ENCODE measurements at regions of chr2 and their contacts with region 1.

Region 1: GRCh38 chr2:68121873-68122679 is 35.6 kb upstream of the PNO1 start:
- DNase-seq: peak; percentile 96
- H3K4me3 ChIP-seq: no peak overlapping the region
- H3K27ac ChIP-seq: no peak overlapping the region
- H3K4me1 ChIP-seq: peaks cover 4 to 9% (median 8%) of the 10 kb centered on the region in 4 donors
- H3K27me3 ChIP-seq: no peaks in the 10 kb centered on the region
- CTCF ChIP-seq: peak in 2 of 3 experiments; percentile 93
- EP300 ChIP-seq: no peak
- POLR2A ChIP-seq: no peak

Region 2: GRCh38 chr2:68196120-68196716 is 74.1 kb after region 1 on chr2:
- intact Hi-C with region 1: loop called (anchors 10 kb)
- DNase-seq: no peak
- H3K4me3 ChIP-seq: no peak overlapping the region
- H3K27ac ChIP-seq: peak overlapping the region in 1 of 4 donors; percentile 37
- H3K4me1 ChIP-seq: peaks cover 23 to 65% (median 46%) of the 10 kb centered on the region in 4 donors
- H3K27me3 ChIP-seq: no peaks in the 10 kb centered on the region
- CTCF ChIP-seq: peak in 2 of 3 experiments; percentile 73 to 75
- EP300 ChIP-seq: no peak
- POLR2A ChIP-seq: no peak

Region 3: GRCh38 chr2:68282811-68283418 is 160.8 kb after region 1 on chr2:
- intact Hi-C with region 1: loop called (anchors 2 kb)
- DNase-seq: no peak
- H3K4me3 ChIP-seq: no peak overlapping the region
- H3K27ac ChIP-seq: no peak overlapping the region
- H3K4me1 ChIP-seq: peaks cover 11 to 31% (median 15%) of the 10 kb centered on the region in 4 donors
- H3K27me3 ChIP-seq: no peaks in the 10 kb centered on the region
- CTCF ChIP-seq: peak; percentile 71 to 76 (median 72)
- EP300 ChIP-seq: no peak
- POLR2A ChIP-seq: no peak

Region 4: DNA sequence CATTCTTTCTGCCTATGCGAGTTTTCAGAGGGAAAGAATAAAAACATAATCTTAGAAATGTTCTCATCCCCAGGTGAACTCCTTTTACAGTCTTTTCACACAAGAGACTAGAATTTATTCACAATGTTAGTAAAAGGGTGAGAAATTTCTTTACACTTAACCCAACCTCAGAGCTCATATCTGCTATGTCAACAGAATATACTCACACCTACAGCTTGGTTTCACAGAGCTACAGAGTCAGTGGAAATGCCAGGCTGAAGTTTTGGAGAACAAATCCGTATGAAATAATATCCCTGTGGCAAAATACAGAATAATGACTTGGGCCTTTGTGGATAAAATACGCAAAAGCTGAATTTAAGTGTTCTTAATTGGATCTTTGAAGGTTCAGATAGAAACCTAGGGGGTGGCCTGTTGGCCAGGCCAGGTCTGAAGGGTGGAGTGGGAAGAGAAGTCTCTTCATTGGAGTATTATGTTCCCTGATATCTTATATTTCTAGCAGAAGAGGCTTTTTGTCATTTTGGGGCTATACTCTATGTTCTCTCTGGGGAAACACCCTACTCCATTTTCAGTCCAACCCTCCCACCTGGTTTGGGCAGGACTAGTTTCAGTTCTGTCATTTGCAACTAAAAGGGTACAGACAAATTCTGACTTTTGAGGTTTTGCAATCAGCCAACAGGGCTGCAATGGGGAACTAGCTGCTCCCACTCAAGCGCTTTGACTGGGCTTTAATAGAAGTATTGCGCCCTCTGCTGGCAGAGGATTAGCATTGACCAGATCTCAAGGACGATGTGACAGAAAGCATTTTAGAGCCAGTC is 319.3 kb after region 1 on chr2:
- intact Hi-C with region 1: loop called (anchors 5 kb)
- DNase-seq: peak; percentile 93
- H3K4me3 ChIP-seq: no peak overlapping the region
- H3K27ac ChIP-seq: peak overlapping the region in 2 of 4 donors; percentile 32 to 72
- H3K4me1 ChIP-seq: peaks cover 1 to 33% (median 18%) of the 10 kb centered on the region in 4 donors
- H3K27me3 ChIP-seq: no peaks in the 10 kb centered on the region
- CTCF ChIP-seq: peak; percentile 88 to 92 (median 91)
- EP300 ChIP-seq: no peak
- POLR2A ChIP-seq: no peak